Naive thymus-derived CD8-positive, alpha-beta T cell (primary cell): ENCODE measurements at regions of chr2 and their contacts with region 1.

Region 1: GRCh38 chr2:174593574-174594203 is 3.9 kb downstream of the WIPF1 start:
- DNase-seq: peak in 9 of 10 donors; percentile 61 to 91 (median 84)
- ATAC-seq: peak; percentile 75 to 85
- H3K4me3 Mint-ChIP-seq: peak overlapping the region; percentile 82 to 98 (median 94)
- H3K27ac Mint-ChIP-seq: peak overlapping the region; percentile 92 to 100 (median 98)
- H3K4me1 Mint-ChIP-seq: peaks cover 32 to 70% (median 55%) of the 10 kb centered on the region in 4 donors
- H3K27me3 Mint-ChIP-seq: no peaks in the 10 kb centered on the region

Region 2: GRCh38 chr2:174473796-174474195 is 119.9 kb before region 1 on chr2:
- POLR2A ChIA-PET with region 1: no interaction called
- DNase-seq: no peak
- ATAC-seq: no peak
- H3K4me3 Mint-ChIP-seq: no peak overlapping the region
- H3K27ac Mint-ChIP-seq: peak overlapping the region in 9 of 10 donors; percentile 22 to 87 (median 41)
- H3K4me1 Mint-ChIP-seq: peaks cover 8 to 41% (median 20%) of the 10 kb centered on the region in 4 donors
- H3K27me3 Mint-ChIP-seq: no peaks in the 10 kb centered on the region

Region 3: DNA sequence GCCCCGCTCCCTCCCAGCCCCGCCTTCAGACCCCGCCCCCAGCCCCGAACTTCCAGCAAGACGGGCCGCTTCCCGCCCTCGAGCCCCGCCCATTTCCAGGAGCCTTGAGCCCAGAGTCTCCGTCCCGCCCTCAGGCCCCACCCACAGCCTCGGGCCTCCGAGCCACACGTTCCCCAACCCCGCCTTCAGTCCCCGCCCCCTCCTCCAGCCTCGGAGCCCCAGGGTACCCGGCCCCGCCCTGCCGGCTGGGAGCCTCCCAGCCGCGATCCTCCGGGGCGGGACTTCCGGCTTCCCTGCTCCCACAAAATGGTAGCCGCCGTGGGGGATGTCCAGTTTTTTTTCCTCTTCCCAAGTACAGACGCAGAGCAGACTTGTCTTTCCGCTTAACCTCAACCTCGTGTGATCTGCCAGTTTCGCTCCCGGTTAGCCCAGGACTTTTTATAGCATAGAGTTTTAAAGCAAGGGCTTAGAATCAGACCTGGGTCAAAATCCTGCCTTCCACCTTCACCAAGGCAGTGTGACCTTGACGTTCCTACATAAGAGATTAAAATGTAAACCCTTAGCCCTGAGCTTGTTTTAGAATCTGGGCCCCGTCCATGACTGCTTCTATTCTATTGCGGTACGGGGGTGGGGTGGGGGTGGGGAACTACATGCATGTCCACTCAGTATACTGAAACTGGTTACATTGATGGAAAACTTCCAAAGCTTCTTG is 106.4 kb before region 1 on chr2:
- POLR2A ChIA-PET with region 1: interaction called, 15 read pairs
- DNase-seq: peak; percentile 60 to 98 (median 86)
- ATAC-seq: peak; percentile 67 to 71
- H3K4me3 Mint-ChIP-seq: peak overlapping the region; percentile 90 to 100 (median 98)
- H3K27ac Mint-ChIP-seq: peak overlapping the region; percentile 87 to 98 (median 94)
- H3K4me1 Mint-ChIP-seq: peaks cover 26 to 79% (median 72%) of the 10 kb centered on the region in 4 donors
- H3K27me3 Mint-ChIP-seq: no peaks in the 10 kb centered on the region

Region 4: GRCh38 chr2:174492963-174493431 is 100.7 kb before region 1 on chr2:
- POLR2A ChIA-PET with region 1: interaction called, 15 read pairs
- DNase-seq: peak; percentile 28 to 91 (median 77)
- ATAC-seq: peak; percentile 87 to 91
- H3K4me3 Mint-ChIP-seq: peak overlapping the region; percentile 81 to 94 (median 89)
- H3K27ac Mint-ChIP-seq: peak overlapping the region; percentile 94 to 100 (median 98)
- H3K4me1 Mint-ChIP-seq: peaks cover 28 to 81% (median 79%) of the 10 kb centered on the region in 4 donors
- H3K27me3 Mint-ChIP-seq: no peaks in the 10 kb centered on the region

Region 5: DNA sequence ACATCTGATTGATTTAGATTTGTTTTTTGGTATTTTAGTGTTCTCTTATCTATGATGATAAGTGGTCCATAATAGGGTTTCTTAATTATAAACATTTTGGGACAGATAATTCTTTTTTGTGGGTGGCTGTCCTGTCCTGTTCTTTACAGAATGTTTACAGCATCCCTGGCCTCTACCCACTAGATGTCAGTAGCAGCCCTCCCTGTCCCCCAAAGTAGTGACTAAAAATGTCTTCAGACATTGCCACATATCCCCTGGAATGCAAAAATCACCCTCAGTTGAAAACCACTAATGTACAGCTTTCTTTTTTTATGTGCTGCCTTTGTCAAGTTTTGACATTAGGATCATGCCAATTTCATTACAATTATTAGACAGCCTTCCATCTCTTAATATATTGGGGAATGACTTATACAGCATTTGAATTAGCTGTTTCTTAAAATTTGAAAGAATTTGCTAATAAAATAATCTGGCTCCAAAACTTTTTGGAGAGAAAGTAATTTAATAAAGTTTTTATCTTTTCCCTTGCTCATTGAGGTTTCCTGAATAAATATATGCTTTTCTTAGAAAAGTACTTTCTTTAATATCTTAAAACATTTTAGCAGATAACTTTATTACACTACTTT is 15.6 kb before region 1 on chr2:
- POLR2A ChIA-PET with region 1: interaction called, 34 read pairs
- DNase-seq: peak in 9 of 10 donors; percentile 49 to 84 (median 71)
- ATAC-seq: peak; percentile 83 to 84
- H3K4me3 Mint-ChIP-seq: peak overlapping the region in 1 of 10 donors; percentile 26
- H3K27ac Mint-ChIP-seq: peak overlapping the region; percentile 3 to 100 (median 76)
- H3K4me1 Mint-ChIP-seq: peaks cover 16 to 89% (median 66%) of the 10 kb centered on the region in 4 donors
- H3K27me3 Mint-ChIP-seq: no peaks in the 10 kb centered on the region

Region 6: GRCh38 chr2:174615871-174616436 is 22.3 kb after region 1 on chr2:
- POLR2A ChIA-PET with region 1: interaction called, 18 read pairs
- DNase-seq: no peak
- ATAC-seq: peak; percentile 77 to 84
- H3K4me3 Mint-ChIP-seq: peak overlapping the region in 9 of 10 donors; percentile 24 to 62 (median 38)
- H3K27ac Mint-ChIP-seq: peak overlapping the region; percentile 35 to 87 (median 74)
- H3K4me1 Mint-ChIP-seq: peaks cover 37 to 93% (median 86%) of the 10 kb centered on the region in 4 donors
- H3K27me3 Mint-ChIP-seq: no peaks in the 10 kb centered on the region

Region 7: GRCh38 chr2:174634130-174635014 is 40.7 kb after region 1 on chr2:
- POLR2A ChIA-PET with region 1: interaction called, 31 read pairs
- DNase-seq: peak; percentile 18 to 66 (median 36)
- ATAC-seq: peak; percentile 78 to 81
- H3K4me3 Mint-ChIP-seq: peak overlapping the region; percentile 86 to 97 (median 94)
- H3K27ac Mint-ChIP-seq: peak overlapping the region; percentile 90 to 99 (median 96)
- H3K4me1 Mint-ChIP-seq: peaks cover 43 to 74% (median 63%) of the 10 kb centered on the region in 4 donors
- H3K27me3 Mint-ChIP-seq: no peaks in the 10 kb centered on the region

Region 8: DNA sequence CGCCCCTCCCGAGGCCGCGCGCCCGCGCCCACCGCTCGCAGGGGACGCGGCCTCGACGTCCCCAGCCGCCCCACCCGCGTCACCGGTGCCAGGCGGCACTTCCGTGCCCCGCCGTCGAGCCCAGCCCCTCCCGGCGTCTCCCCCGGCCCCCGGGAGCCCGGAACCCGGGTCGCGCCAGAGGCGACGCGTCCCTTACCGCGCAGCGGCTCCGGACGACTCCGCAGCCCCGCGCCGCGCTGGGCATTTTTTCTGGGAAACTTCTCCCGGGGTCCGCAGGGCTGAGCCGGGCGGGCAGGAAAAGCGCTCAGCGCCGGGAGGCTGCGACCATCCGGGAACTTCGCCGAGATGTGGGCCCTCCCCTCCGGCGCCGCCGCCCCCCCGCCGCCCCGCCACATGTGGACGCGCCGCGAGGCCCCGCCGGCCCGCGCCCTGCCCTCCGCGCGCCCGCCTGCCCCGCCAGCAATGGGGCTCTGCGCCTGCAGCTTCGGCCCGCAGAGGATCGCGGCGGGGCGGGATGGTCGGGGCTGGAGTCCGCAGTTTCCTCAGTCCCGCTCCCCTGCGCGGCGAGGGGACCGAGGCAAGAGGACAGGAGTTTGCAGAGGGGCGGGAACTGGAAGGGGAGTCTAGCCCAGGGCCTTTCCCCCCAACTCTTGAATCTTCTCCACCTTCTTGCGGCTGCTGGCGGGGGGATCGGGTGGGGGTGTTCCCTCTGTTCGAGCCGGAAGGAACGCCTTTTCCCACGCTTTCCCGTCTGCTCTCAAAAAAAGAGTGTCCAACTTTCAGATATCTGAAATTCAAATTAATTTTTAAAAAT is 89.1 kb after region 1 on chr2:
- POLR2A ChIA-PET with region 1: interaction called, 12 read pairs
- DNase-seq: peak; percentile 45 to 80 (median 66)
- ATAC-seq: peak; percentile 70 to 76
- H3K4me3 Mint-ChIP-seq: peak overlapping the region; percentile 86 to 98 (median 95)
- H3K27ac Mint-ChIP-seq: peak overlapping the region; percentile 84 to 99 (median 96)
- H3K4me1 Mint-ChIP-seq: peaks cover 19 to 67% (median 55%) of the 10 kb centered on the region in 4 donors
- H3K27me3 Mint-ChIP-seq: no peaks in the 10 kb centered on the region

Region 9: GRCh38 chr2:174729797-174730697 is 136.4 kb after region 1 on chr2:
- POLR2A ChIA-PET with region 1: no interaction called
- DNase-seq: peak in 8 of 10 donors; percentile 10 to 65 (median 36)
- ATAC-seq: peak; percentile 81
- H3K4me3 Mint-ChIP-seq: peak overlapping the region; percentile 84 to 94 (median 90)
- H3K27ac Mint-ChIP-seq: peak overlapping the region in 7 of 10 donors; percentile 37 to 85 (median 76)
- H3K4me1 Mint-ChIP-seq: peaks cover 15 to 29% (median 23%) of the 10 kb centered on the region in 4 donors
- H3K27me3 Mint-ChIP-seq: peaks cover 0 to 33% (median 2%) of the 10 kb centered on the region in 5 donors